Activated B cell treated with CpG ODN at 0.5 μM for 24 hours (primary cell): ENCODE measurements at regions of chr11 and their contacts with region 1.

Region 1: GRCh38 chr11:8192016-8192895 is 23.4 kb upstream of the RIC3 start:
- DNase-seq: peak; percentile 37
- ATAC-seq: peak; percentile 85
- H3K4me3 Mint-ChIP-seq: no peak overlapping the region
- H3K27ac Mint-ChIP-seq: no peak overlapping the region
- H3K4me1 Mint-ChIP-seq: peaks cover 8% of the 10 kb centered on the region
- H3K27me3 Mint-ChIP-seq: peaks cover 4% of the 10 kb centered on the region
- CTCF ChIP-seq: peak; percentile 42

Region 2: DNA sequence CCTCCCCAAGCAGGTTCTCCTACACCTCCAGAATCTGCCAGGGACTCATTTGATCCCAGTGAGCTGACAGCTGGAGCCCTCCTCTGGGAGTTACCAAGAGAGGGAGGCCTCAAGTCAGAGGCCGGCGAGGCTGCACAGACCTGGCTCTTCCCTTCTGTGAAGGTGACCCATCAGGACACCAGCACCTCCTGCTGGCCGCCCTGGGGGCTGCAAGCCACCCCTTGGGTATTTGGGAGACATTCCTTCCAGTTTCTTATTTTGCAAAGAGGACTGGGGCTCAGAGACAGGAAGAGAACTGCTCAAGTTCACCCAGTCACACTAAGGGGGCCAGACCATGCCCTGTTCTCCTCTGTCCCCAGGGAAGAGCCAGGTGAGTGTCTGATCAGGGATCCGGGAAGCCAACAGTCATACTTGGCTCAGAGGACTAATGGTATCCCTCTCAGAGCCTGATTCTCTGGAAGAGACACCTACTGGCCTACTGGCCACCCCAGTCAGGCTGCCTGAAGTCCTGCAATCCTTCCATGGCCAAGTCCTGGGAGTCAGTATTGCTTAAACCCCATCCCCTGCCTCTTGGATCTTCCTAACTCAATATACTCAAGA is 17.1 kb after region 1 on chr11:
- CTCF ChIA-PET with region 1: interaction called, 98 read pairs
- POLR2A ChIA-PET with region 1: interaction called, 5 read pairs
- intact Hi-C with region 1: loop called (anchors 1 kb)
- DNase-seq: peak; percentile 65
- ATAC-seq: peak; percentile 55
- H3K4me3 Mint-ChIP-seq: no peak overlapping the region
- H3K27ac Mint-ChIP-seq: peak overlapping the region; percentile 46
- H3K4me1 Mint-ChIP-seq: peaks cover 36% of the 10 kb centered on the region
- H3K27me3 Mint-ChIP-seq: no peaks in the 10 kb centered on the region
- CTCF ChIP-seq: peak; percentile 81

Region 3: GRCh38 chr11:8219257-8220021 is 27.2 kb after region 1 on chr11:
- CTCF ChIA-PET with region 1: interaction called, 10 read pairs
- POLR2A ChIA-PET with region 1: interaction called, 10 read pairs
- intact Hi-C with region 1: no loop called
- DNase-seq: no peak
- ATAC-seq: peak; percentile 42
- H3K4me3 Mint-ChIP-seq: no peak overlapping the region
- H3K27ac Mint-ChIP-seq: no peak overlapping the region
- H3K4me1 Mint-ChIP-seq: no peaks in the 10 kb centered on the region
- H3K27me3 Mint-ChIP-seq: peaks cover 3% of the 10 kb centered on the region
- CTCF ChIP-seq: no peak